OCI-LY7 (cell line): ENCODE measurements at regions of chr1 and their contacts with region 1.

Region 1: GRCh38 chr1:203769505-203770343 is 4.7 kb downstream of the LAX1 start:
- DNase-seq: no peak
- H3K4me3 ChIP-seq: no peak overlapping the region
- H3K27ac ChIP-seq: no peak overlapping the region
- H3K4me1 ChIP-seq: peaks cover 19% of the 10 kb centered on the region
- CTCF ChIP-seq: no peak

Region 2: GRCh38 chr1:203625628-203626019 is 144.1 kb before region 1 on chr1:
- CTCF ChIA-PET with region 1: no interaction called
- POLR2A ChIA-PET with region 1: interaction called, 7 read pairs
- intact Hi-C with region 1: loop called (anchors 5 kb)
- DNase-seq: peak; percentile 77
- H3K4me3 ChIP-seq: peak overlapping the region; percentile 74
- H3K27ac ChIP-seq: peak overlapping the region; percentile 78
- H3K4me1 ChIP-seq: peaks cover 48% of the 10 kb centered on the region
- CTCF ChIP-seq: peak; percentile 78

Region 3: DNA sequence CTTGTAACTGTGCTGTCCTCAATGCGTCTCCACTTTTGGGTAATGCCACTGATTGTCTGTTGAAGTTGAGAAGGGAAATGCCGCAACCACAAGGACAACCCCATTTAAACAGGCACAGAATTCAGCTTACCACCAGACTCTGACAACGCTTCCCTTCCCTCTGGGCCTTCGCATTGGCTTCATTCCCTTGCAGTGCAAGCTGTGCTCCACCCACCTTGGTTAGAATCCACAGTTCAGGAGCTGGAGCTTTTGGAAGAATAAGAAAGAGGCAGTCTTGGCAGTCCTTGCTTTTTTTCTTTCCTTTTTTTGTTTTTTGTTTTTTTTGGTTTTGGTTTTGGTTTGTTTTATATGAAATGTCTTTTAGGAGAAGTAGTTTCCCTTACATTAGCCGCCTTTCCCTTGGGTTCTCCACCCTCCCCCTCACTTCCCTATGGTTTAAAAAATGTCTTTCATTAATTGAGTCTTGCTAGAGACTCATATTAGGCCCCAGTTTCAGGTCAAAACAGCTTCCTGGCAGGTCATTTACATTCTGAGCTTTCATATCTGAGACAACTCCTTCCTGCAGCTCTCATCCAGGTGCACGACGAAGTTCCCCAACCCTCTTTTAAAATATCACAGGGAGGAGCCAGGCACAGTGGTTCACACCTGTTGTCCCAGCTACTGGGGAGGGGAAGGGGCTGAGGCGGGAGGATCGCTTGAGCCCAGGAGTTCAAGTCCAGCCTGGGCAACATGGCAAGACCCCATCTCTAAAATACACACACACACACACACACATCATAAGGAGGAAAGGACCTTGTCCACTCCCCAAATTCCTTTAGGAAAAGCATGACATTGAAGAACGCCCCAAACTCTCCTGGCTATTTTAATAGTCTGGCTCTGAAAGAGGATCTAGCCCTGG is 25.4 kb before region 1 on chr1:
- CTCF ChIA-PET with region 1: interaction called, 4 read pairs
- POLR2A ChIA-PET with region 1: interaction called, 62 read pairs
- intact Hi-C with region 1: loop called (anchors 1 kb)
- DNase-seq: peak; percentile 84
- H3K4me3 ChIP-seq: peak overlapping the region; percentile 45
- H3K27ac ChIP-seq: peak overlapping the region; percentile 83
- H3K4me1 ChIP-seq: peaks cover 52% of the 10 kb centered on the region
- CTCF ChIP-seq: no peak

Region 4: GRCh38 chr1:203754455-203754864 is 15.3 kb before region 1 on chr1:
- CTCF ChIA-PET with region 1: interaction called, 4 read pairs
- POLR2A ChIA-PET with region 1: interaction called, 84 read pairs
- intact Hi-C with region 1: loop called (anchors 1 kb)
- DNase-seq: peak; percentile 88
- H3K4me3 ChIP-seq: peak overlapping the region; percentile 57
- H3K27ac ChIP-seq: peak overlapping the region; percentile 98
- H3K4me1 ChIP-seq: peaks cover 69% of the 10 kb centered on the region
- CTCF ChIP-seq: no peak

Region 5: DNA sequence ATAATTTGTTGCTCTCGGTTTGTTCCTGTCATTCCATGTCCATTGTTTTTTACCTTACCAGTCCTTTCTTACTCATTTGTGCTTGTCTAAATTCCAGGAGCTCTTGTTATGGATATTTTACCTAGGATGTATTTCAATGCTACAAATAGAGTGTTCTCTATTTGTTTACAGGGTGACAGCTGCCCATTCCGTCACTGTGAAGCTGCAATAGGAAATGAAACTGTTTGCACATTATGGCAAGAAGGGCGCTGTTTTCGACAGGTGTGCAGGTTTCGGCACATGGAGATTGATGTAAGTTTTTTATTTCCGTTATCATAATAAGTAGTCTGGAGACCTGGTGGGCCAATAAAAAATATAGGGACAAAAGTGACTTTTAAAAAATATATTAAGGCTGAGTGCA is 48.7 kb after region 1 on chr1:
- CTCF ChIA-PET with region 1: no interaction called
- POLR2A ChIA-PET with region 1: interaction called, 20 read pairs
- intact Hi-C with region 1: loop called (anchors 5 kb)
- DNase-seq: peak; percentile 89
- H3K4me3 ChIP-seq: peak overlapping the region; percentile 47
- H3K27ac ChIP-seq: peak overlapping the region; percentile 93
- H3K4me1 ChIP-seq: peaks cover 39% of the 10 kb centered on the region
- CTCF ChIP-seq: peak; percentile 32; the same call in 1 of the 2 replicates

Region 6: DNA sequence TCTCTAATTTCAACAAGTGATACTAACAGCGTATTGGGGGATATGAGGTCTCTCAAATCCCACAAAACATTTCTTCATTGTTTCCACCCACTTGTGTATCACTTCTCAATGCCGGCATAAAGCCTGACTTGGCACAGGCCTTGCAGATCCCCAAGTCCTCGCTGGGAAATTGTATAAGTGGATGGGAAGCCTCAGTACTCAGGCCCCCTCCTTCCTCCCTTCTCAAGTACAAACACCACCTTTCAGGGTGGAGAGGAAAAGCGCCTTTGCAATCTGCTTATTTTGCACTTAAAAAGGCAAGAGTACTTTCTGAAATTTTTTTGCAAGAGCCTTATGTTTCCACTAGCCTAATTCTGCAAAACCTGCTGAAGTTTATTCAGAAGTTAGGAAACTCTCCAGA is 1612.8 kb after region 1 on chr1:
- CTCF ChIA-PET with region 1: no interaction called
- POLR2A ChIA-PET with region 1: no interaction called
- intact Hi-C with region 1: no loop called
- DNase-seq: no peak
- H3K4me3 ChIP-seq: no peak overlapping the region
- H3K27ac ChIP-seq: no peak overlapping the region
- H3K4me1 ChIP-seq: no peaks in the 10 kb centered on the region
- CTCF ChIP-seq: no peak